ENCODE measurements at regions of chr4 and their contacts with region 1.

Region 1: DNA sequence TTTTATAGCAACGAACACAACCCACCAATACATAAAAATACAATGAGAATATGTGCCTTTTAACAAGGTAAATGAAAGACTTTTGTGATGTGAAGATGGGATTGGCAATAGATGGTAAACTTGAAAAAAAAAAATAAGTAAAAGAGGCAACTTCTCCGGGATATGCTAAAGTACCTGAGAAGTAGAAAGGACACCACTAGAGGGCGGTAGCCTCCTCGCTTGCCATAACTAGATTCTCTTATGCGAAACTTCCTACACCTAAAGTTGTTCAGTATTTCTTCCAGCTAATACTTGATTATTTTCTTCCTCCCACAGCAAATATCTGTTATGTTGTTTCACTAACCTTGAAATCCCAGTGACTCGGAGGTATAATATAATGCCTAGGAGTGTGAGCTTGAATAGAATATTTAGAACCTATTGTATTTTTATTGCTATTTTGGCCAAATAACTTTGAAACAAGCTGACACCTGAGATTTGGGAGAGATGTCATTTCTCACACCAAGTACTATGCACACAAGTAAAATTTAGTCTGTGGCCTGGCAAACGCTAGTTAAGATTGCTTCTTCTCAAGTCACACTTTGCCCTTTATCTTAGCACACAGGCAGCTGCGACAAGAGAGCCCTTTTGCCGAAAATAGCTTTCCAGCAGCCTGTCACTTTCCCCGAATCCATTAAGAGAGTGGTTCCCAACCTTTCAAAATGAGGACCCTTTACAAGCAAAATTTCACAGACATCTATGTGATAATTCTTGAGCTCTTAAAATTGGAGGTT is 44.9 kb upstream of the PDLIM5 start:
- DNase-seq: peak; percentile 67
- H3K4me3 ChIP-seq: no peak overlapping the region
- H3K27ac ChIP-seq: no peak overlapping the region
- H3K27me3 ChIP-seq: no peaks in the 10 kb centered on the region
- CTCF ChIP-seq: peak; percentile 93

Region 2: DNA sequence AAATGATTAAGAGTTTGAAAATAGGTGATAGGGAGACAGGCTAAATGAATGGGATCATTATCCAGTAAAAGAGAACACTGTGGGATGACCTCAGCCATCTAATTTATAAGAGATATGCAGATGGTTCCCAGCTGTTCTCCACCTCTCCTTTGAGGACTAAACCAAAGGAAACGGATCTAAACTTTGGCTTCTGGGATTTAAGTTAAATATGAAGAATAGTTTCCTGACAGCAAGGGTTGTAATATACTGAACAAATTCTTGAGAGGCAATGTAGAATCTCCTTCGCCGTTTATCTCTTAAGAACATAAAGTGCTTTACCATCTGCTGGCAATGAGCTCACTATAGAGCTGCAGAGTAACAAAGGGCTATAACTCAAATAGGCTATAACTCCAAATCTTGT is 28.8 kb before region 1 on chr4:
- CTCF ChIA-PET with region 1: interaction called, 10 read pairs
- POLR2A ChIA-PET with region 1: no interaction called
- DNase-seq: no peak
- H3K4me3 ChIP-seq: no peak overlapping the region
- H3K27ac ChIP-seq: no peak overlapping the region
- H3K27me3 ChIP-seq: no peaks in the 10 kb centered on the region
- CTCF ChIP-seq: no peak

Region 3: GRCh38 chr4:94428884-94429557 is 22.2 kb after region 1 on chr4:
- CTCF ChIA-PET with region 1: interaction called, 10 read pairs
- POLR2A ChIA-PET with region 1: no interaction called
- DNase-seq: no peak
- H3K4me3 ChIP-seq: no peak overlapping the region
- H3K27ac ChIP-seq: no peak overlapping the region
- H3K27me3 ChIP-seq: no peaks in the 10 kb centered on the region
- CTCF ChIP-seq: no peak

Region 4: DNA sequence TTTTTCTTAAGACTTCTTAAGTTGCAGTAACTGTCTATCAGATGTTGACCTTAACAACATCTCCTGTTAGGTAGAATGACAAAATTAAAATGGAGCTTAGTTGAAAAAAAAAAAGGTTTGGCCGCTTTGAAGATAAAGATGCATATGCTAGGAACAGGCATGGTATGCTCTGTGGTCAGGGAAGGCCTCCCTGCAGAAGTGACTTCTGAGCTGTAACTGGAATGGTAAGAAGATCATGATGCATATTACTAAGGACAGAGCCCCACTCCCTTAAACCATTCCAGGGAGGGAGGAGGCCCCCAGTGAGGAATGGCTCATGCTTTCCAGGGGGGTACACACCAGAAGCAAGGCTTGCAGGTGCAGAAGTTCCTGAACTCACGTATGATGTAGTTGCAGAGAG is 88.6 kb after region 1 on chr4:
- CTCF ChIA-PET with region 1: no interaction called
- POLR2A ChIA-PET with region 1: no interaction called
- DNase-seq: no peak
- H3K4me3 ChIP-seq: no peak overlapping the region
- H3K27ac ChIP-seq: no peak overlapping the region
- H3K27me3 ChIP-seq: no peaks in the 10 kb centered on the region
- CTCF ChIP-seq: no peak

Region 5: GRCh38 chr4:94588896-94589693 is 182.2 kb after region 1 on chr4:
- CTCF ChIA-PET with region 1: interaction called, 25 read pairs
- POLR2A ChIA-PET with region 1: no interaction called
- DNase-seq: no peak
- H3K4me3 ChIP-seq: no peak overlapping the region
- H3K27ac ChIP-seq: no peak overlapping the region
- H3K27me3 ChIP-seq: no peaks in the 10 kb centered on the region
- CTCF ChIP-seq: no peak

Region 6: GRCh38 chr4:94613248-94613647 is 206.4 kb after region 1 on chr4:
- CTCF ChIA-PET with region 1: interaction called, 10 read pairs
- POLR2A ChIA-PET with region 1: no interaction called
- DNase-seq: no peak
- H3K4me3 ChIP-seq: no peak overlapping the region
- H3K27ac ChIP-seq: no peak overlapping the region
- H3K27me3 ChIP-seq: no peaks in the 10 kb centered on the region
- CTCF ChIP-seq: no peak

Region 7: GRCh38 chr4:94660614-94661013 is 253.8 kb after region 1 on chr4:
- CTCF ChIA-PET with region 1: no interaction called
- POLR2A ChIA-PET with region 1: no interaction called
- DNase-seq: no peak
- H3K4me3 ChIP-seq: no peak overlapping the region
- H3K27ac ChIP-seq: no peak overlapping the region
- H3K27me3 ChIP-seq: no peaks in the 10 kb centered on the region
- CTCF ChIP-seq: no peak

Measured in AG04450 (cell line).